ENCODE measurements at regions of chr14 and their contacts with region 1.

Region 1: DNA sequence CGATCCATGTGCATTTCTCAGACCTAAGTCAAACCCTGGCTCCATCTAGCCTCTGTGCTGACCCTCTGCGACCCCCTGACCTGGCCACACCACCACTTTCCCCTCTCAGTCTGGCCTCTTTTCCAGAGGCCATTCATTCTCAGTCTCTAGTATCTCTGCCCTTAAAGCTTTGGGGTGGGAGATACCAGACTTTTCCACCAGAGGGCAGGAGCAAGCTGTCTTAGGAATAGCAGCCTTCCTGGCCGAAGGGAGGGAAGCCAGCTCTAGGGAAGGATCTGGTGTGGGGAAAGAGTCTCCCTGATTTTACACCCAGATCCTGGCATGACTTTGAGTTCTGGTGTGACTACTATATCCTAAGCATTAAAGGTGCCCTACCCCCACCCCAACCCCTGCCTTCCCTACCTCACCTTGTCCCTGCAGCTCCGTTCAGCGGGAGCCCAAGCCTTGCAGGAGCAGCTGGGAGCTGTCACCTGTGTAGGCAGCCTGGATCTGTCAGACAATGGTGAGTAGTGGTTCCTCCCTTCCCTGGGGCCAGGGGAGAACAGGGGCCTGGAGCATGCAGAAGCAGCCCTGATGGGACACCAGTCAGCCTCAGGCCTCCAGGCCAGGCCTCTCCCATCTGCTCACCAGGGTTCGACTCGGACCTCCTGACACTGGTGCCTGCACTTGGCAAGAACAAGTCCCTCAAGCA is 6.6 kb downstream of the CARMIL3 start:
- DNase-seq: peak; percentile 80
- H3K4me3 ChIP-seq: no peak overlapping the region
- H3K27ac ChIP-seq: no peak overlapping the region
- H3K4me1 ChIP-seq: no peaks in the 10 kb centered on the region
- H3K27me3 ChIP-seq: peaks cover 3% of the 10 kb centered on the region
- CTCF ChIP-seq: peak; percentile 80

Region 2: DNA sequence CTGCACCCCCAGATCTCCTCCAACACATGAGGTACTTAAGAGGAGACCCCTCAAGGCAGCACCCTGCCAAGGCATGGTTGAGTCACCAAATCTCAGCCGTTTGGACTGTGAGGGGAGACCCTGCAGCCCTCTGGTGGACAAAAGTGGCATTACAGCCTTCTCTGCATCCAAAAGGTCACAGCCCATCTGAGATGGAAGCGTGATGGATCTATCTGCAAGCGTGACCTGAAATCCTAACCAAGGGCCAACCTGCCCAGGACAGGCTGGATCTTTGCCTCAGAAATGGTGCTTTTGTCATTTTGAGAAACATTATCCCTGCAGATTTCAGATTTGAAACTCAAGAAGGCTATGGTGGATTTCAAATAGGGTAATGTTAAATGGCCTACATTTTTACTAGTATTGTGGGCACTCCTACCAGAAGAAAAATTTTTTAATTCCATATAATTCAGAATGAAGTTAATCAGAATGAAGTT is 128.5 kb before region 1 on chr14:
- CTCF ChIA-PET with region 1: no interaction called
- POLR2A ChIA-PET with region 1: no interaction called
- intact Hi-C with region 1: no loop called
- DNase-seq: peak; percentile 84
- H3K4me3 ChIP-seq: no peak overlapping the region
- H3K27ac ChIP-seq: no peak overlapping the region
- H3K4me1 ChIP-seq: peaks cover 7% of the 10 kb centered on the region
- H3K27me3 ChIP-seq: no peaks in the 10 kb centered on the region
- CTCF ChIP-seq: peak; percentile 93

Region 3: DNA sequence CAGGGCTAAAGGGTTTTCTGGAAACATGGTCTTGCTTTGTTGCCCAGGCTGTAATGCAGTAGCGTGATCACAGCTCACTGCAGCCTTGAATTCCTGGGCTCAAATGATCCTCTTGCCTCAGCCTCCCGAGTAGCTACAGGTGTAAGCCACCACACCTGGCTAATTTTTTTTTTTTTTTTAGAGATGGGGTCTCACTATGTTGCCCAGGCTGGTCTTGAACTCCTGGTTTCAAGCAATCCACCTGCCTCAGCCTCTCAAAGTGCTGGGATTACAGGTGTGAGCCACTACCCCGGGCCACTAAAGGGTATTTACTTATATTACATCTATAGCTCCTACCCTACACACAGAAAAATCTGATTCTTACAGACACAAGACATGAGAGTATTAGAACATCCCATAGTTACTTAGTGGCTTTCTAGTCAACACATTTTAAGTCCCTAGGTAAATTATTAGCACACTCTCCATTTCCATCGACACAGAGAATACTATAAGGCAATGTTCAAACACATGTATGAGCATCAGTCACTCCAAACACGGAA is 50.0 kb after region 1 on chr14:
- CTCF ChIA-PET with region 1: interaction called, 57 read pairs
- POLR2A ChIA-PET with region 1: no interaction called
- intact Hi-C with region 1: loop called (anchors 5 kb)
- DNase-seq: no peak
- H3K4me3 ChIP-seq: no peak overlapping the region
- H3K27ac ChIP-seq: no peak overlapping the region
- H3K4me1 ChIP-seq: peaks cover 2% of the 10 kb centered on the region
- H3K27me3 ChIP-seq: no peaks in the 10 kb centered on the region
- CTCF ChIP-seq: no peak

Region 4: DNA sequence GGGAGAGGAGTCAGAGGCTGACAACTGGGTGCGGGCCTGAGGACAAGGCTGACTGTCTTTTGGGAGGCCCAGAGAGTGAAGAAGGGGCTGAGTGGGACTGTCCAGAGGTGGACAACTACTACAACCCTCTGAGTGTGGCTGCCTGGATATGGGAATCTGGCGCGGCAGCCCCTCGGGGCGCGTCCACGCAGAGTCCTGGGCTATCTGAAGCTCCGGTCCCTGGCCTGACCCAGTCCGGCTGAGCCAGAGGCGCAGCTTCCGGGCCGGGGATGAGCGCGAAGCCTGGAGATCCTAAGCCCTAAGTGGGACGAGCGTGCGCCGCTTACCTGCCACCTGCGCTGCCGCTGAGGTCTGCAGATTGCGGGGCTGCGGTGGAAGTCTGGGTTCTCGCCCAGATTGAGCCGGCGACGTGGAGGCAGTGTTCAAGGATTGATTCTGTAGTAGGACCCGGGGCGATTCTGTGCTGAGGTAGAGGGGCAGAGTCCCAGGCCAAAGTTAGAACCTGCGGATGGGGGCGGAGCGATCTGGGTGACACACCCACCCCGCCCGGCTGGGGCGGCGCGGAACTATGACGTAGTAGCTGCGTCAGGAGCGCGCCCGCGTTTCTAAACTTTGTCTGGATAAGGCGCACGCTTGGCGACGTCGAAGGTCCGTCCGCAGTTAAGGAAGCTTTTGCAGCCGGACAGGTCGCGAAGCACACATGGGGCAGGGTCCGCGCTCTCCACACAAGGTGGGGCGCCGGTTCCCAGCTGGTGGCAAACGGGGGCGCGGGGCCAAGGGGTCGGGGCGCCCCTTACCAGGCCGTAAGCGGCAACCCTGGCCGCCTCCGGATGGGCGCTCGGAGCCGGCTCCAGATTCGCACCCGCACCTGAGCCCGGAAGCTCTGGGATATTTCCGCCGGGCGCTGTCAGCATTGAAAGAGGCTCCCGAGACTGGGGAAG is 241.1 kb after region 1 on chr14 and contains the starts of genes DHRS1 and NOP9:
- CTCF ChIA-PET with region 1: interaction called, 10 read pairs
- POLR2A ChIA-PET with region 1: no interaction called
- intact Hi-C with region 1: loop called (anchors 5 kb)
- DNase-seq: peak; percentile 90
- H3K4me3 ChIP-seq: peak within 1 kb of the TSS; percentile 92
- H3K27ac ChIP-seq: peak within 1 kb of the TSS; percentile 82
- H3K4me1 ChIP-seq: no peaks in the 10 kb centered on the region
- H3K27me3 ChIP-seq: no peaks in the 10 kb centered on the region
- CTCF ChIP-seq: no peak
- total RNA-seq, gene DHRS1: 13.3 and 14.5 TPM in 2 replicates
- total RNA-seq, gene NOP9: 34.0 and 37.1 TPM in 2 replicates